Caco-2 (cell line): ENCODE measurements at regions of chr11 and their contacts with region 1.

Region 1: DNA sequence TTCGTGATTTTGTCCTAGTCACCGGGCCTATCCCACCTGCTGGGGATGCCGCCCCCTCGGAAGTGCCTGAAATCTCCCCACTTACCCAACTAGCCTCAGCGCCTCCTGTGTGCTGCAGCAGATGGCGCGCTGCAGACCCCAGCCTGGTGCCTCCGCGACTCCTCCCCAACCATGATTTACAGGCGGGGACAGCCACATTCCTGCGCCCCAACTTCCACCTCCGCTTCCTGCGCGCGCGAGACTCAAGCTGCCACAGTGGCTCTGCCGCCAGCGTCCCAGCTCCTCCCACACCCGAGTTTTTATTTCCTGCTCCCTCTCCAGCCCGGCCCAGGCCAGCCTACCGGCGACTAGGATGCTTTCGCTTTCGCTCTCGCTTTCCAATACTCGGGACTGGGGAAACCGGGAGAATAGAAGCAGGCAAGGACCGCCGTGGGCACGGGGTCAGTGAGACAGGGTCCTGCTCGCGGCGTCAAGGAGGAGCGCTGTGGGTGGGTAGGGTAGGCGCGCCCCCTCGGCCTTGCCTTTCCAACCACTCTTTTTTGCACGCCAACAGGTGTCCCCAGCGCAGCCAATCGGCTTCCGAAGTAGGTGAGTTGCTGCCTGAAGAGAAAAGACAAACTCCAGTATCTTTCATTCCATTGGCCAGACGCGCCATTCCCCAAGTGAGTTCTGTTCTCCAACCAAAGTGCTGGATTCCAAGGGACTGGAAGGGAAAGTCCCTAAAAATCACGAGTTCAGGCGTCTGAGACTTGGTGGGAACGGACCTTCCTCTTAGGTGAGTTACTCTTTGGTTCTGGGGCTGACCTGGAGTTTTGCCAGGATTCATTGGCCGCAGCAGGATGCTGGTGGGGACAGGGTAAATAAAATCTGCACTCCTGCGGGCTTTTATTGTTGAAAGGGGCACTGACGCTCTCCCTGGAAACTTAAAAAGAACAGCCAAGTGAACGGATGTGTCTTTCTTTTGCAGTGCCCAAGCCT is at the start of gene FAM111A:
- DNase-seq: peak; percentile 92 to 95
- H3K4me3 ChIP-seq: peak within 1 kb of the TSS; percentile 55
- H3K4me3 Mint-ChIP-seq: peak within 1 kb of the TSS; percentile 98
- H3K27ac Mint-ChIP-seq: peak within 1 kb of the TSS; percentile 94
- H3K4me1 ChIP-seq: peaks cover 21% of the 10 kb centered on the region
- H3K4me1 Mint-ChIP-seq: peaks cover 45% of the 10 kb centered on the region
- H3K27me3 ChIP-seq: no peaks in the 10 kb centered on the region
- H3K27me3 Mint-ChIP-seq: no peaks in the 10 kb centered on the region
- CTCF ChIP-seq: peak in 1 of 2 experiments; percentile 75
- total RNA-seq, gene FAM111A: 76.1 and 78.8 TPM in 2 replicates

Region 2: DNA sequence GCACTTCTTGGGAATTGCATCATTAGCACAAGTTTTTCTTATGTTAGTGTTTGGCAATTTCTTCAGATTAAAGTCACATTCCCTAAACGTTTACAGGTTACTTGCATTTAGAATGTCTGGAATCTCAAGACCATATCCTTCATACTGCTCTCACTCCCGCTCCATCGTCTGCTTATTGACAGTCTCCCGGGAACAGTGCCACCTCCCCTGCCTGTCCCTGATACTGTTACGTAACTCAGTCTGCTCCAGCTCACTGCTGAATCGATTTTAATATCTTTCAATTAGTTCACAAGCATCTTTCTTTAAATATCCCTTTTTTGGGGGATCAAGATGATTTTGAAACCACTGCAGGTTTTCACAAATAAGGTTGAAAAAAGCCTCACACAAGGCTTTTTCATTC is 346.5 kb before region 1 on chr11:
- CTCF ChIA-PET with region 1: no interaction called
- POLR2A ChIA-PET with region 1: no interaction called
- intact Hi-C with region 1: loop called (anchors 10 kb)
- DNase-seq: no peak
- H3K4me3 ChIP-seq: no peak overlapping the region
- H3K4me3 Mint-ChIP-seq: peak overlapping the region; percentile 23
- H3K27ac Mint-ChIP-seq: no peak overlapping the region
- H3K4me1 ChIP-seq: peaks cover 4% of the 10 kb centered on the region
- H3K4me1 Mint-ChIP-seq: peaks cover 7% of the 10 kb centered on the region
- H3K27me3 ChIP-seq: no peaks in the 10 kb centered on the region
- H3K27me3 Mint-ChIP-seq: no peaks in the 10 kb centered on the region
- CTCF ChIP-seq: no peak

Region 3: DNA sequence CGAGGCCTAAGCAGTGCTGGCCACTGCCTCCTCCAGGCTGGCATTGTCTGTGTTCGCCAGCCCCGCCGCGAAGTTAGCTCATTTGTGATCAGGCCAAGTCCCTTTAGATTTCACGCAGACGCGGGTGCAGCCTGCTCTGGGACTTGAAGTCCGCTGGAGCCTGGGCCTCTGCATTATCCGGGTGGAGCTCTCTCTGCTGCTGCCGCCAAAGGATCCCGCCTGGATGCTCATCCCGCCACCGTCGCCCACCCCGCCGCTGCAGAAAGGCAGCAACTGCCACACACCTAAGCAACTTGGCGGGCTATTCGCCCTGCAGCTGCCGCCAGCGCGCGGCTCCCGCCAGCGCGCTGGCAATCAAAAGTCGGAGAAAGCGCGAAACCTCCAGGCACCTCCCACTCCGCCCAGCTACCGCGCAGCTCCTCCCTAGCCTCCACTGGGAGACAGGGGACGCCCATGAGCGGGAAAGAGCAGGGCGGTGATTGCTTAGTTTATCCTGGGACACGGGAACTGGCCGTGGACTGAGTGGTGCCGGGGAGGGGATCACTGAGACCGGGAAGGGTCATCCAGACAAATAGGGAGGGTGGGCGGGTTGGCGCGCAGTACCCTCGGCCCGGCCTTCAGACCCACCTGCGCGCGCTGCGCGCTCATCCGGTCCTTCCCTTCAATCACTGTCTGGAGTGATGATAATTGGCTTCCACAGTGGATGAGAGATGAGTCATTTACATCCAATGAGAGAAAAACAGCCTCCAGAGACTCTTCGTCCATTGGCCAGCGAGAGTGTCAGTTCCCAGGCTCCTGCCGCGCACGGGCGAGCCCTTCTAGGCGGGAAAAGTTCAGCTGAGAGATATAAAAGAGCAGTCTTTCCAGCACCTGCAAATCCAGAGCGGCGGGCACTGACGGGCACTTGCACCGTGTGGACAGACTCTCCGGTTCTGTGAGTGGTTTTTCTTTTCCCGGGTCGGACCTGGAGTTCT is 36.2 kb before region 1 on chr11 and contains the start of gene FAM111B:
- CTCF ChIA-PET with region 1: interaction called, 7 read pairs
- POLR2A ChIA-PET with region 1: interaction called, 13 read pairs
- intact Hi-C with region 1: loop called (anchors 1 kb)
- DNase-seq: peak; percentile 94 to 97
- H3K4me3 ChIP-seq: peak within 1 kb of the TSS; percentile 46
- H3K4me3 Mint-ChIP-seq: peak within 1 kb of the TSS; percentile 99
- H3K27ac Mint-ChIP-seq: peak within 1 kb of the TSS; percentile 97
- H3K4me1 ChIP-seq: peaks cover 21% of the 10 kb centered on the region
- H3K4me1 Mint-ChIP-seq: peaks cover 52% of the 10 kb centered on the region
- H3K27me3 ChIP-seq: no peaks in the 10 kb centered on the region
- H3K27me3 Mint-ChIP-seq: no peaks in the 10 kb centered on the region
- CTCF ChIP-seq: peak in 1 of 2 experiments; percentile 35
- total RNA-seq, gene FAM111B: 49.3 and 55.8 TPM in 2 replicates